ENCODE measurements at regions of chr18 and their contacts with region 1.

Region 1: DNA sequence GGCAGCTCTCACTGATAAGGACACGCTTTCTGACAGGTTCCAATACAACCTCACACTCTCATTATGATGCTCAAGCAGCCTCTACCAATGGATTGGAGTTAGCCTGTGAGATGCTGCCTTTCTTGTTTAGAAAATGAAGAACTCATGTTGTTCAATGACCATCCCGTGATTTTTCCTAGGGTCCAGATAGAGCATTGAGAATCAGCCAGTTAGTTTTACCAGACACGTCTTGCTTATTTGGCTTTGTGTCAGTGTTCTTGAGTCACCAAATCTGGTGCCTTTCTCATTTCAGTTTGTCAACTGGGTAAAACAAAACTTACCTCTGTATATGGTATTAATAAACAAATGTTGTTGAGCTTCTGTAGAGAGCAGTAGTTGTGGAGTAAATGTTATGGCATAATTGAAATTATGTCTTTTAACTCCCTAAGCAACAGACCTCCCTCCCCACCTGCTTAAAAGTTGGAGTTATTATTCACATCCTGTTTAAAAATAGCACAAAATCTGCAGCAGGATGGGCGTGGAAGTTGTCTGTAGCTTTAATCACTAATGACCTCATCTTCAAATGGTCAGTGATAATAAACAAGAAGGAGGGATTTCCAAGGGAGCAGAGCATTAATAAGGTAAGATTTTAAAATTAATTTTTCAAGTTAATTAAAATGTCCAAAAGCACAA is 167.3 kb downstream of the HRH4 start:
- DNase-seq: no peak
- H3K4me3 ChIP-seq: no peak overlapping the region
- H3K4me3 Mint-ChIP-seq: no peak overlapping the region
- H3K27ac ChIP-seq: no peak overlapping the region
- H3K27ac Mint-ChIP-seq: no peak overlapping the region
- H3K4me1 ChIP-seq: no peaks in the 10 kb centered on the region
- H3K4me1 Mint-ChIP-seq: no peaks in the 10 kb centered on the region
- H3K27me3 ChIP-seq: no peaks in the 10 kb centered on the region
- H3K27me3 Mint-ChIP-seq: peaks cover 7 to 8% of the 10 kb centered on the region in 2 donors

Region 2: DNA sequence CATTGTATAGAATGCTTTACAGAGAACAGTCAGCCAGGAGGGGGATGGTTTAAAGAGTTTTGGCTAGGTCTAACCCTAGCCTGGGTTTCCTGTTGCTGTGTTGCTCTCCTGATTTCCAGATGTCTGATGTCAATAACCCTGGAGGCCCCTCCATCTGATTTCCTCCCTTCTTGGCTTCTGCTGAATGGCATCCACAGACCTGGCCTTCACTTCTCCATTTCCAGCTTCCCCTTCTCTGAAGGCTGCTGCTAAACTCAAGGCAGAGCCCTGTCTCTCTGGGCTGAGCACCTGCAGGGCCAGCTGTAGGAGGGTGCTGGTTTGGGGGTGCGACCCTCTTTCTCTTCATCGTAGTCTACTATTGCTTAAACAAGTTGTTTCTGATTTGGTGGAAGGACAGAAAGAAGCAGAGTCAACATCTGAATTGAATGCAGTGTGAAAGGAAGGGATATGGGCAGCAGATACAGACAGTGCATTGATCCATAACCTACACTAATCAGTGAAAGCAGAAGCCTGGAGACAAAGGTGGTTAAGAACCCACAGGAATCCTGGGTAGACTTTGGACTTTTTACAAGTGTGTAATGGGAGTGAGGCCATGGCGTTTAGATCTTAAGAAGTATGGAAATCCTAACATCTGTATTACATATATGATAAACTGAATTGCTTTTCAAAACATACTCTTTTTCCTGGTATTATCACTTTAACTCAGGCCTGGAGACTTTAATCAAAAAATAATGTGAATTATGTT is 13.7 kb before region 1 on chr18:
- CTCF ChIA-PET with region 1: no interaction called
- POLR2A ChIA-PET with region 1: no interaction called
- intact Hi-C with region 1: loop called (anchors 1 kb)
- DNase-seq: no peak
- H3K4me3 ChIP-seq: no peak overlapping the region
- H3K4me3 Mint-ChIP-seq: no peak overlapping the region
- H3K27ac ChIP-seq: no peak overlapping the region
- H3K27ac Mint-ChIP-seq: peak overlapping the region in 1 of 7 donors; percentile 62
- H3K4me1 ChIP-seq: no peaks in the 10 kb centered on the region
- H3K4me1 Mint-ChIP-seq: no peaks in the 10 kb centered on the region
- H3K27me3 ChIP-seq: no peaks in the 10 kb centered on the region
- H3K27me3 Mint-ChIP-seq: peaks cover 0 to under 1% of the 10 kb centered on the region in 2 donors

Region 3: GRCh38 chr18:24672165-24672941 is 44.6 kb after region 1 on chr18:
- CTCF ChIA-PET with region 1: no interaction called
- POLR2A ChIA-PET with region 1: no interaction called
- intact Hi-C with region 1: no loop called
- DNase-seq: peak in 2 of 5 donors; percentile 7 to 8
- H3K4me3 ChIP-seq: no peak overlapping the region
- H3K4me3 Mint-ChIP-seq: no peak overlapping the region
- H3K27ac ChIP-seq: no peak overlapping the region
- H3K27ac Mint-ChIP-seq: no peak overlapping the region
- H3K4me1 ChIP-seq: no peaks in the 10 kb centered on the region
- H3K4me1 Mint-ChIP-seq: no peaks in the 10 kb centered on the region
- H3K27me3 ChIP-seq: no peaks in the 10 kb centered on the region
- H3K27me3 Mint-ChIP-seq: peaks cover 6 to 7% of the 10 kb centered on the region in 2 donors

Region 4: DNA sequence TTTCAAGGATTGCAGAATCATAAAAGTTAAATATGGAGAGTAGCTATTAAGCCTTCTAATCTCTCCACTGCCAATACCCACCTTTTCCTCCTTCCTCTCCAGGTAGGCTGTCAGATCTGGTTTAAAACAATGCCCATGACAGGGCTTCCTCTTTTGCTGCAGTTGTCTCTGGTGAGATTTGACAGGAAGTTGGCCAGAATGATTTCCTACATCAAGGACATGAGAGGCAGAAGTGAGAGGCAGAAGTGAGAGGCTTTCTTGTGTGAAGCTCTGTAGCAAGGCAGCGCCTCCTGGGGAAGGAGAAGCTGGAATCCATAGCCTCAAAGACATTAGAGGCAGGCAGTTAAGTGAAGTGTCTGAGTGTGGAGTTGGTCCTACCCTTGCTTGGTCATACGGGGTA is 218.4 kb after region 1 on chr18:
- CTCF ChIA-PET with region 1: no interaction called
- POLR2A ChIA-PET with region 1: no interaction called
- intact Hi-C with region 1: no loop called
- DNase-seq: no peak
- H3K4me3 ChIP-seq: no peak overlapping the region
- H3K4me3 Mint-ChIP-seq: no peak overlapping the region
- H3K27ac ChIP-seq: no peak overlapping the region
- H3K27ac Mint-ChIP-seq: no peak overlapping the region
- H3K4me1 ChIP-seq: no peaks in the 10 kb centered on the region
- H3K4me1 Mint-ChIP-seq: no peaks in the 10 kb centered on the region
- H3K27me3 ChIP-seq: no peaks in the 10 kb centered on the region
- H3K27me3 Mint-ChIP-seq: peaks cover 0 to 3% of the 10 kb centered on the region in 2 donors

Region 5: GRCh38 chr18:25077944-25078723 is 450.4 kb after region 1 on chr18:
- CTCF ChIA-PET with region 1: no interaction called
- POLR2A ChIA-PET with region 1: no interaction called
- intact Hi-C with region 1: no loop called
- DNase-seq: no peak
- H3K4me3 ChIP-seq: no peak overlapping the region
- H3K4me3 Mint-ChIP-seq: no peak overlapping the region
- H3K27ac ChIP-seq: no peak overlapping the region
- H3K27ac Mint-ChIP-seq: no peak overlapping the region
- H3K4me1 ChIP-seq: no peaks in the 10 kb centered on the region
- H3K4me1 Mint-ChIP-seq: no peaks in the 10 kb centered on the region
- H3K27me3 ChIP-seq: no peaks in the 10 kb centered on the region
- H3K27me3 Mint-ChIP-seq: no peaks in the 10 kb centered on the region